Heart left ventricle (tissue), 16 donors: ENCODE measurements at regions of chr13 and their contacts with region 1.

Region 1: DNA sequence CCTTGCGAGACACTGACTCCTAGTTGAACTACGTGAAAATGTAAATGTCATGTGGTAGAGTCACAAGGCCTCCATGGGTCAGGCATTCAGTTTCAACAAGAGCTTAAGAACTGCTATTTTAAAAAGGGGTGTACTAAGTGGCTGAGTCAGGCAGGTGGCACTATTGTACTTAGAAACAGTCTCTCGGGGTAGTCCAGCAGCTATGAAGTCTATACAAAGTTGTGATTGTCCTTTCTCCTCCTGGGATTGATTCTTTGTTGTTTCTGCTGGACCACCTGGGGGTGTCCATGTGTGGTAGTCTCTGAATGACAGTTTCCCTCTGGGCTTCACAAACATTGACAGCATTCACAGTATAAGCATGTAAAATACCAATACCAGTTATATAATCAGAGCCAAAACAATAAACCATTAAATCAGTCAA is 33.0 kb downstream of the UGGT2 start:
- DNase-seq: peak in 1 of 5 donors; percentile 12
- ATAC-seq: peak in 3 of 4 donors; percentile 85 to 88 (median 86)
- H3K4me3 ChIP-seq: no peak overlapping the region
- H3K27ac ChIP-seq: no peak overlapping the region
- H3K4me1 ChIP-seq: no peaks in the 10 kb centered on the region
- H3K27me3 ChIP-seq: no peaks in the 10 kb centered on the region
- CTCF ChIP-seq: peak; percentile 26 to 72 (median 60)
- POLR2A ChIP-seq: no peak

Region 2: DNA sequence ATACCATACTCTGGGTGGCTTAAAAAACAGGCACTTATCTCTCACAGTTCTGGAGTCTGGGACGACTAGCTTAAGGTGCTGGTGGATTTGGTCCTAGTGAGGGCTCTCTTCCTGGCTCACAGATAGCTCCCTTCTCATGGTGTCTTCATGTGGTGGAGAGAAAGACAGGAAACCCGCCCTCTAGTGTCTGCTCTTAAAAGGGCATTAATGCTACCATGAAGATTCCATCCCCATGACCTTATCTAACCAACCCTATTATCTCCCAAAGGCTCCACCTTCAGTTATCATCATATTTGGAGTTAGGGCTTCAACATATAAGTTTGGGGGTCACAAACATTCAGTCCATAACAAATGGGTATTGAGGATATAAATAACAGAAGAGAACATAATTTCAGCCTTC is 209.2 kb after region 1 on chr13:
- intact Hi-C with region 1: loop called in 4 of 10 experiments (anchors 5 to 10 kb)
- DNase-seq: no peak
- ATAC-seq: no peak
- H3K4me3 ChIP-seq: no peak overlapping the region
- H3K27ac ChIP-seq: no peak overlapping the region
- H3K4me1 ChIP-seq: no peaks in the 10 kb centered on the region
- H3K27me3 ChIP-seq: no peaks in the 10 kb centered on the region
- CTCF ChIP-seq: peak in 10 of 12 donors; percentile 14 to 46 (median 36)
- POLR2A ChIP-seq: no peak

Region 3: DNA sequence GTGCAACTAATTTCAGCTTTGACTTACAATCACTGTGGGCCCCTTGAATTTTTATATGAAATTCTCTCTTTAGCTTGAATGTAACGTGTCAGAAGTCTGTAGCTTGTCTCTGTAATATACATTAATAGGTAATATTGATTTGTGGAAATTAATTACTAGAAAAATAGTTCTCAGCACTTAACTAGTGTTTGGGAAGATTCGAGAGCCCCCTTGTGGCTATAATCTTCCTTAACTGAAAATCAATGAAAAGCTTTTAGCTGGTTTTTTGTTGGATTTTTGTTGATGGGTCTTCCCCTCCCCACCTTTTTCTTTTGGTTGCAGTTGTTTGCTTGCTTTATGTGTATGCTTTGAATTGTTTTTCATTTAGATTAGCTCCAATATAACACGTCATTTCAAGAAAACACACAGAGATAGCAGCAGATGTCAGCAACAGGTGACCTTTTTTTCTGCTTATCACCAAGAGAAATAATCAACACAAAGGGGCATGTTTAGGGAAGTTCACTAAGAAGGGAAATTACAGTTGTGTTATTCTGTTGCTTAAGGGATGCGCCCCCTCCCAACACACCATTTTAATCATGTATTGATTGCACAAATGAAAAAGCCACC is 797.3 kb after region 1 on chr13:
- intact Hi-C with region 1: loop called in 9 of 10 experiments (anchors 5 to 10 kb)
- DNase-seq: no peak
- ATAC-seq: no peak
- H3K4me3 ChIP-seq: no peak overlapping the region
- H3K27ac ChIP-seq: no peak overlapping the region
- H3K4me1 ChIP-seq: peaks cover 0 to 2% (median 0%) of the 10 kb centered on the region in 12 donors
- H3K27me3 ChIP-seq: peaks cover 0 to 3% (median 0%) of the 10 kb centered on the region in 9 donors
- CTCF ChIP-seq: peak; percentile 24 to 61 (median 42)
- POLR2A ChIP-seq: no peak

Region 4: GRCh38 chr13:96822895-96823294 is 802.7 kb after region 1 on chr13:
- intact Hi-C with region 1: loop called in 9 of 10 experiments (anchors 5 to 10 kb)
- DNase-seq: no peak
- ATAC-seq: no peak
- H3K4me3 ChIP-seq: no peak overlapping the region
- H3K27ac ChIP-seq: no peak overlapping the region
- H3K4me1 ChIP-seq: no peaks in the 10 kb centered on the region
- H3K27me3 ChIP-seq: no peaks in the 10 kb centered on the region
- CTCF ChIP-seq: peak in 3 of 12 donors; percentile 13 to 14 (median 13)
- POLR2A ChIP-seq: no peak

Region 5: DNA sequence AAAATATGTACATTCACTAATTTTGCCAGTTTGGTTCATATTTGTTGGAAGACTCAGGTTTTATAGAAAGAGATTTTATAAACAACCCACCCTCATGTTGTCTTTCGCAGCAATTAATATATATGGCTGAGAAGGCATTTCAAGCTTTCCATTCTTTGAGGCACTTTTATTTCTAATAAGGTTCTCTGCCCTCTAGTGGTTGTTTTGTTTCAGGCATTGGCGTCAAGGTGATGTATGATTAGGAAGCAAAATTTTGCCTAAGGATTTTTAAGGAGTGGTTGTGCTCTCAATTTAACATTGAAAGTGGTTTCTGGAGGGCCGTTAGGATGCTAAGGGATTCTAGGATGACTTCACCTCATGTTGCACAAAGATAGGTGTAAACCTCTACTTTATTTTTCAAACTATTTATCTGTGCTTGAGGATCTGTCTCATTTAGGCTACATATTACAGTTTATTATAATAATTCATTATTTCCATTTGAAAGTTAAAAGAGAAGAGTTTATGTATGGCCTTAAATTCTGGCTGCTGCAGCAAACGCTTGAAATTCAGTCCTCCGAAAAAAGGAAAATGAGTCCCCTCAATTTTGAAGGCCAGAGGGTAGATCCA is 938.2 kb after region 1 on chr13:
- intact Hi-C with region 1: loop called (anchors 1 to 10 kb)
- DNase-seq: no peak
- ATAC-seq: no peak
- H3K4me3 ChIP-seq: no peak overlapping the region
- H3K27ac ChIP-seq: no peak overlapping the region
- H3K4me1 ChIP-seq: no peaks in the 10 kb centered on the region
- H3K27me3 ChIP-seq: no peaks in the 10 kb centered on the region
- CTCF ChIP-seq: peak; percentile 65 to 78 (median 74)
- POLR2A ChIP-seq: no peak